Lower leg skin (tissue), 4 donors: ENCODE measurements at regions of chr19 and their contacts with region 1.

Region 1: DNA sequence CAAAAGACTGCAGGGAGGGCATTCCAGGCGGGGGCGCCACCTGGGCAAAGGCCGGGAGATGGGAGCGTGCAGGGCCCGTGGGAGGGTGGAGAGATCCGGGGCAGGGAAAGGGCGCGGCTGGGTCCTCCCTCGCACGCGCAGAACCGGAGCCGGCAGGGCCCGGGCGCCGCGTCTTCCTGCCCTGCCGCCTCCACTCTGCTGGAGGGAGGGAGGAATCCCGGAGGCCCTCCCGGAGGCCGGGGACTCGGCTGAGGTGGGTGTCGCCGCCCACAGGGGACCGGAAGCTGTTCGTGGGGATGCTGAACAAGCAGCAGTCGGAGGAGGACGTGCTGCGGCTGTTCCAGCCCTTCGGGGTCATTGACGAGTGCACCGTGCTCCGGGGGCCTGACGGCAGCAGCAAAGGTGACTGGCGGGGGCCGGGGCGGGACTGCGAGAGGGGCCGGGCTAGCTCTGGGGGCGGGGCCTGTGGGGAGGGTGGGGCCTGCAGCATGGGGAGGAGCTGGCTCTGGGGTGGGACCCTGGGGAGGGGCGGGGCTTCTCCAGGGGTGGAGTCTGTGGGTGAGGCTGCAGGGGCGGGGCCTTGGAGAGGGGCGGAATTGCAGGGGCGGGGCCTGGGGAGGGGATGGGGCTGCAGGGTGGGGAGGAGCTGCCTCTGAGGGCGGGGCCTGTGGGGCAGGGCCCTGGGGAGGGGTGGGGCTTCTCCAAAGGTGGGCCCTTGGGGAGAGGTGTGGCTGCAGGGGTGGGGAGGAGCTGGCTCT is 51.3 kb downstream of the CELF5 start:
- DNase-seq: peak; percentile 56 to 95
- H3K4me3 ChIP-seq: no peak overlapping the region
- CTCF ChIP-seq: no peak
- POLR2A ChIP-seq: no peak

Region 2: GRCh38 chr19:2992958-2993357 is 282.8 kb before region 1 on chr19:
- intact Hi-C with region 1: loop called (anchors 5 kb)
- DNase-seq: no peak
- H3K4me3 ChIP-seq: no peak overlapping the region
- CTCF ChIP-seq: no peak
- POLR2A ChIP-seq: no peak

Region 3: GRCh38 chr19:3319643-3320353 is 44.0 kb after region 1 on chr19:
- intact Hi-C with region 1: no loop called
- DNase-seq: no peak
- H3K4me3 ChIP-seq: no peak overlapping the region
- CTCF ChIP-seq: no peak
- POLR2A ChIP-seq: no peak